ENCODE measurements at regions of chr6 and their contacts with region 1.

Region 1: GRCh38 chr6:11232193-11232769 is at the start of gene NEDD9:
- DNase-seq: peak; percentile 99
- total RNA-seq, gene NEDD9: 14.1 TPM

Region 2: DNA sequence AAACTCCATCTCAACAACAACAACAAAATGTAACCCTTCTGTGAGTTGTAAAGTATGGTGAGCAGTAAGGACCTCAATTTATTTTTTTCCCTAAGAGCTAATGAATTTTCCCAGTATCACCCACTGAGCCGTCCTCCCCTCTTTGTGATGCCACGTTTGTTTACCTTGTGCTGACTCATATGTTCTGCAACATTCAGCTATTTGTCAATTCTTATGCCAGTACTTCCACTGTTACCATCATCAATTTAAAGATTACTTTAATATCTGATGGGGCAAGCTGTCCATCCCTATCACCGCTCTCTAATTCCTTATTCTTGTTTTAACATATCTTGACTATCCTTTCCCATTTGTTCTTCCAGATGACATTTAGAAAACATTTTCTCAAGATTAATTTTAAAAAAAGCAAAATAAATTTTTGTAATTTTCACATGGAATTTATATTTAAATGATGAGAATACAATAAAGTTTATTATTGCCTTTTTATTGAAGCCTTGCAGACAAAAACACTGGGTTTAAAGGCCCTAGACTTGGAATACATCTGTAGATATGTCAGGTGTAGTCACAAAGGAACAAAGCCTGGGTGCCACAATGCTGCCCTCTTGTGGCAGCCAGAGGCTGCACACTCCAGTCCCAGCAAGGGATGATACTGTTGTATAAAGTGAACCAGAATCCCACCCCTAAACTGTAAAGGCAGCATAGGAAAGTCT is 431.3 kb before region 1 on chr6:
- intact Hi-C with region 1: no loop called
- DNase-seq: peak; percentile 84

Region 3: GRCh38 chr6:11172501-11173332 is 59.6 kb before region 1 on chr6:
- intact Hi-C with region 1: loop called (anchors 5 kb)
- DNase-seq: peak; percentile 84

Region 4: GRCh38 chr6:11277275-11278206 is 45.3 kb after region 1 on chr6:
- intact Hi-C with region 1: no loop called
- DNase-seq: no peak

Region 5: GRCh38 chr6:11317885-11318771 is 85.8 kb after region 1 on chr6:
- intact Hi-C with region 1: loop called (anchors 5 kb)
- DNase-seq: no peak

Region 6: GRCh38 chr6:11366183-11366933 is 134.1 kb after region 1 on chr6:
- intact Hi-C with region 1: loop called (anchors 5 kb)
- DNase-seq: no peak